ENCODE measurements at regions of chr10 and their contacts with region 1.

Region 1: GRCh38 chr10:3852147-3852904 is 67.3 kb upstream of the KLF6 start:
- DNase-seq: no peak
- ATAC-seq: peak; percentile 80
- H3K4me3 Mint-ChIP-seq: peak overlapping the region; percentile 56
- H3K27ac Mint-ChIP-seq: peak overlapping the region; percentile 88
- H3K4me1 Mint-ChIP-seq: peaks cover 36% of the 10 kb centered on the region
- H3K27me3 Mint-ChIP-seq: no peaks in the 10 kb centered on the region
- CTCF ChIP-seq: no peak

Region 2: DNA sequence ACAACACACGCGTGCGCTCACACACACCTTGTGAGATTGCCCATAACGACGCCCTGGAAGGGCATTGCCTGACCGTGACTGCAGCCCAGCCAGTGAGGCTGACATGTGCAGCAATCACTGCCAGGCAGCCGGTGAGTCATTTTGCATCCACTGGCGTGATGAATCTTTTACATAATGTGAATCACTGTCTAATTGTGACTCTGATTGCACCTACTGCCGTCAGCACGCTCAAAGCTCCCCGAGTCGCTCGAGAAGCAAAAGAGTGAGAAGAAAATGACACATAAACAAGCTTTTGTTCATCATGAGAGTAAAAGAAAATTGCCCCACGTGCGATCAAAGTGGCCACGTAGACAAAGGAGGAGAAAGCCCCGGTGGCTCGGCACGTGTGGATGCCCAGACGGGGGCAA is 902.4 kb before region 1 on chr10:
- CTCF ChIA-PET with region 1: no interaction called
- POLR2A ChIA-PET with region 1: no interaction called
- intact Hi-C with region 1: no loop called
- DNase-seq: no peak
- ATAC-seq: peak; percentile 71
- H3K4me3 Mint-ChIP-seq: peak overlapping the region; percentile 33
- H3K27ac Mint-ChIP-seq: peak overlapping the region; percentile 35
- H3K4me1 Mint-ChIP-seq: peaks cover 20% of the 10 kb centered on the region
- H3K27me3 Mint-ChIP-seq: peaks cover 23% of the 10 kb centered on the region
- CTCF ChIP-seq: no peak

Region 3: DNA sequence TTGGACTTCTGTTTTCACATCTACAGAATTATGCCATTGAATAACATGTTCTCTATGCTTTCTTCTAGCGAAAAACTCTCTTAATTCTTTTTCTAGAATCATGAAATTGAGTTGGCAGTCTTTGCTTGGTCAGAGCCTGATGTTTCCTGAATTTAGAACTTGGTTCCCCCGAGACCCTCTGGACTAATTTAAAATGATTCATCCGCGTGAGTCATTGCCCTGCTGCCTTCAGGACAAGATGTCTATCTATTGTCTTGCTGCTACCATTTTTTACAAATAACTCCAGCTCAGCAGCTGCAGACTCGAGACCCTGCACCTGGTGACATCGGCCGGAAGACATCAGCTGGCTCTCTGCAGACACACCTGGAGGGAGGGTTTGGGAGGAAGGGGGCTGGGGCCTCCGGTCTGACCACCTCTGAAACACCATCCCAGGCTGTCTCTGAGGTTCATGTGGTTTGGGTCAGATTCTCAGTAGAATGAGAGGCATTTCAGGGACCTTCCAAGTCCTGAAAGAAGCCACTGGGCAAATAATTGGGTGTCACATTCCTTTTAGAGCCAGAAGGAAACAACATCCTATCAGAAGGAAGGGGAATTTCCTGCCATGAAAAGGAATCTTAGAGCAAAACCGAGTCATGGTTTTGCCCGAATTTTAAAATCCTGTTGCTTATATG is 46.4 kb before region 1 on chr10:
- CTCF ChIA-PET with region 1: interaction called, 3 read pairs
- POLR2A ChIA-PET with region 1: interaction called, 8 read pairs
- intact Hi-C with region 1: loop called (anchors 1 kb)
- DNase-seq: peak; percentile 47
- ATAC-seq: peak; percentile 69
- H3K4me3 Mint-ChIP-seq: peak overlapping the region; percentile 73
- H3K27ac Mint-ChIP-seq: peak overlapping the region; percentile 92
- H3K4me1 Mint-ChIP-seq: peaks cover 69% of the 10 kb centered on the region
- H3K27me3 Mint-ChIP-seq: no peaks in the 10 kb centered on the region
- CTCF ChIP-seq: no peak

Region 4: DNA sequence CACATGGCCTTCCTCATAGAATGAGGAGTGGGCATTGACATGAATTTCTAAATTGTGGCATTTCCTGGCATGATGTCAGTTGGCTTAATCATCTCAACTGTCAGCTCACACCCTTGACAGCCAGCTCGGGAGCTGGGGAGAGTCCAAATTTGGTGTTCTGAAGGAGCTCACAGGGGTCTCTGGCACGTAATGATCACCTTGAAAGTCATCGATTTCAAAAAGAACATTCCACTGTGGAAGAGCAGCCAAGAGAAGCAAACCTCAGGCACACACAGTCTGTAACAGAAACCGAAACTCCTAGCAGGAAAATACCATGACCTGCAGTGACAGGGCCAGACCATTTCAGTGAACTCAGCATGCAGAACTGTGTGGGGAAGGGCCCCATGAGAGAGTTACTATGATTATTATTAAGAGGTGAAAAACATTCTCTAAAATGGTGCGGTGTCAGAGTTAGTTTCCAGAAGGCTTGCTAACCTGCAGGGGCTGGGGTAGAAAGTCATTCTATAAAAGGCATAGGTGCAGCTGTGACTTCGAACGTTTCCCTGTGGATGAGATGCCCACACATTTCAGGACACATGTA is 40.9 kb before region 1 on chr10:
- CTCF ChIA-PET with region 1: no interaction called
- POLR2A ChIA-PET with region 1: interaction called, 5 read pairs
- intact Hi-C with region 1: loop called (anchors 1 kb)
- DNase-seq: peak; percentile 29
- ATAC-seq: peak; percentile 95
- H3K4me3 Mint-ChIP-seq: peak overlapping the region; percentile 74
- H3K27ac Mint-ChIP-seq: peak overlapping the region; percentile 84
- H3K4me1 Mint-ChIP-seq: peaks cover 52% of the 10 kb centered on the region
- H3K27me3 Mint-ChIP-seq: no peaks in the 10 kb centered on the region
- CTCF ChIP-seq: no peak

Region 5: GRCh38 chr10:3828404-3829155 is 23.7 kb before region 1 on chr10:
- CTCF ChIA-PET with region 1: no interaction called
- POLR2A ChIA-PET with region 1: interaction called, 4 read pairs
- intact Hi-C with region 1: loop called (anchors 2 kb)
- DNase-seq: no peak
- ATAC-seq: peak; percentile 65
- H3K4me3 Mint-ChIP-seq: peak overlapping the region; percentile 75
- H3K27ac Mint-ChIP-seq: peak overlapping the region; percentile 82
- H3K4me1 Mint-ChIP-seq: peaks cover 23% of the 10 kb centered on the region
- H3K27me3 Mint-ChIP-seq: no peaks in the 10 kb centered on the region
- CTCF ChIP-seq: no peak

Region 6: GRCh38 chr10:3866332-3866731 is 14.0 kb after region 1 on chr10:
- CTCF ChIA-PET with region 1: no interaction called
- POLR2A ChIA-PET with region 1: interaction called, 7 read pairs
- intact Hi-C with region 1: loop called (anchors 1 kb)
- DNase-seq: no peak
- ATAC-seq: peak; percentile 28
- H3K4me3 Mint-ChIP-seq: no peak overlapping the region
- H3K27ac Mint-ChIP-seq: peak overlapping the region; percentile 19
- H3K4me1 Mint-ChIP-seq: peaks cover 33% of the 10 kb centered on the region
- H3K27me3 Mint-ChIP-seq: no peaks in the 10 kb centered on the region
- CTCF ChIP-seq: no peak

Region 7: DNA sequence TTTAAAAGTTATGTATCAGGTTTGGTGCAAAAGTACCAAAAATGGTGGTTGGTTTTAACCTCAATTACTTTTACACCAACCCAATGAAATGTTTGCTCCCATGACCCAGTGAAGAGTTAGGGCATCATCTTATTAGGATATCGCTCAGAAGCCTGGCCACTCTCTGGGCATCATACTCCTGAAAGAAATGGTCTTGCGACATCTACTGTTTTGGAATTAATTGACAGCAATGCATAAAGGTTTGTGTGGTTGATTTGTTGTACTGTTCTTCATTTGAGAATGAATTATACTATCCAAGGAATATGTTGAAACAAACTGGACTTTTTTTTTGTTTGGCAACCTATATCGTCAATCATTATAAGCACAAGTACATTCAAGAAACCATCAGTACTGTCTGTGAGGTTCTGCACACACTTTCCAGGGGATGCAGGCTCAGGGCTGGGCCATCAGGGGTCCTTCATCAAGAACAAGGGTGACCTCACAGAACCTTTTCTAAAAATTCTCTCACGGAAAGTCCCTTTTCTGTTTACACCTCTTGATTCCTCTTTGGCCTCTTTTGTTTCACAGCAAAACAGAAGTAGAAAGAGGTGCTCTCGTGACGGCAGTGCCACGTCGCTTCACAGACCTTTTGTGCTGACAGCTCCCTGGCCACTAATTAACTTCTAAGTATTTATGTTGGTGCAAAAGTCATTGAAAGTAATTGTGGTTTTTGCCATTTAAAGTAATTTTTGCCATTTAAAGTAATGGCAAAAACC is 49.9 kb after region 1 on chr10:
- CTCF ChIA-PET with region 1: no interaction called
- POLR2A ChIA-PET with region 1: interaction called, 3 read pairs
- intact Hi-C with region 1: loop called (anchors 1 kb)
- DNase-seq: peak; percentile 30
- ATAC-seq: peak; percentile 87
- H3K4me3 Mint-ChIP-seq: peak overlapping the region; percentile 58
- H3K27ac Mint-ChIP-seq: peak overlapping the region; percentile 87
- H3K4me1 Mint-ChIP-seq: peaks cover 54% of the 10 kb centered on the region
- H3K27me3 Mint-ChIP-seq: no peaks in the 10 kb centered on the region
- CTCF ChIP-seq: no peak

Region 8: DNA sequence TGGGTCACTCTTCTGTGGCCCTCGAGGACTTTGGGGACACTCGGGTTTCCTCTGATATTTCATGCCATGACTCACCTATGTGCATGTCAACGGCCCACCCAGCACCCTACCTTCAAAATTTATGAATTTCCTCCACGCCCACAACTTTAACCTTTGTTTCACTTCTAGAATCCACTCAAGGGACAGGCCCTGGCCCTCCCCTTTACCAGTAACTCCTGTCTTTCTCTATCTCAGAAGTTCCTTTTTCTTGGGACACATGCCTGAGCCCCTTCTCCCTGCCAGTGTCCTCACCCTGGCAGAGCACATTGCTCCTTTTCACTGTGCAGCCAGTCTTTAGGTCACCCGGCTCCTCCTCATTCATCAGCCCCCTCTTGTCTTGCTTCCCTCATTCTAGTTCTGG is 215.2 kb after region 1 on chr10:
- CTCF ChIA-PET with region 1: no interaction called
- POLR2A ChIA-PET with region 1: no interaction called
- intact Hi-C with region 1: no loop called
- DNase-seq: no peak
- ATAC-seq: peak; percentile 86
- H3K4me3 Mint-ChIP-seq: no peak overlapping the region
- H3K27ac Mint-ChIP-seq: no peak overlapping the region
- H3K4me1 Mint-ChIP-seq: no peaks in the 10 kb centered on the region
- H3K27me3 Mint-ChIP-seq: no peaks in the 10 kb centered on the region
- CTCF ChIP-seq: no peak

Measured in activated B cell treated with CpG ODN at 0.5 μM for 24 hours (primary cell).